Heart right ventricle (tissue), 16 donors: ENCODE measurements at regions of chr15 and their contacts with region 1.

Region 1: DNA sequence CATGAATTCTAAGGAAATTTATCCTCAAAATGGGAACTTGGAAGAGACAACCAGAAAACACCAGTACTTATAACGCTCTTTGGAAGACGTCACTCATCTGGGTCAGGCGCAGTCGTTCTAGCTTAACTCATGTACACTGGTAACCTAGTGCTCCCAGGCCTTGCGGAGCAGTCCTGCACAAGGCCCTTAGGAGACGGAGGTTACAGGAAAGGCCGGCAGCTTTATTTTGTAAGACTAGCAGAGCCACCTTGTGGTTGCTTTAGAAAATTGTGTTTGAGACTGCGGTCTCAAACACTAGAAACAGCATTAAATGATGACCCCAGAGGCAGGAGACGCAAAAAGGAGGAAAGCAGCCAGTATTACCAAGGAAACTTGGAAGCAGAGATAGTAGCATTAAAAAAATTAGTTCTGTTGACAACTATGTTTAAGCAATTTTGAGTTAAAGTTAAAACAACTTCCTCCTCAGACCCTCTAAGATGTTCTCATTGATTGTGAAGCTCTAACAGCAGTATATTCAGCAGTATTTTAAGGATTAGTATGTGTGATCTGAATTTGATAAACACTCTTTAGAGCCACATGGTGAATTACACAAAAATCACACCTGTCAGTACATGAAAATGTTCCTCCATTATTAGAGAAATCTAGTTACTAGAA is 141.9 kb upstream of the C2CD4B start:
- DNase-seq: peak; percentile 27 to 58
- ATAC-seq: peak; percentile 84 to 93 (median 88)
- H3K4me3 ChIP-seq: no peak overlapping the region
- H3K27ac ChIP-seq: peak overlapping the region in 1 of 10 donors; percentile 19
- H3K4me1 ChIP-seq: peaks cover 0 to 19% (median 6%) of the 10 kb centered on the region in 9 donors
- H3K27me3 ChIP-seq: peaks cover 0 to 7% (median 0%) of the 10 kb centered on the region in 7 donors
- CTCF ChIP-seq: peak; percentile 57 to 81 (median 67)

Region 2: GRCh38 chr15:62052713-62053112 is 254.3 kb before region 1 on chr15:
- intact Hi-C with region 1: no loop called
- DNase-seq: no peak
- ATAC-seq: no peak
- H3K4me3 ChIP-seq: no peak overlapping the region
- H3K27ac ChIP-seq: no peak overlapping the region
- H3K4me1 ChIP-seq: peaks cover 0 to 56% (median 26%) of the 10 kb centered on the region in 9 donors
- H3K27me3 ChIP-seq: no peaks in the 10 kb centered on the region
- CTCF ChIP-seq: no peak

Region 3: GRCh38 chr15:62066663-62067447 is 240.1 kb before region 1 on chr15 and contains the start of gene C2CD4A:
- intact Hi-C with region 1: loop called in 3 of 10 experiments (anchors 5 to 10 kb)
- DNase-seq: peak; percentile 54 to 56
- ATAC-seq: peak; percentile 58 to 90 (median 76)
- H3K4me3 ChIP-seq: peak within 1 kb of the TSS in 9 of 10 donors; percentile 45 to 71 (median 57)
- H3K27ac ChIP-seq: peak within 1 kb of the TSS in 3 of 10 donors; percentile 6 to 56 (median 38)
- H3K4me1 ChIP-seq: peaks cover 2 to 35% (median 19%) of the 10 kb centered on the region in 9 donors
- H3K27me3 ChIP-seq: peaks cover 0 to 30% (median 0%) of the 10 kb centered on the region in 7 donors
- CTCF ChIP-seq: peak in 3 of 9 donors; percentile 19 to 33 (median 26)
- total RNA-seq, gene C2CD4A: 0.25 TPM in 1 of 10 donors, not detected in the others